ENCODE measurements at regions of chr7 and their contacts with region 1.

Region 1: DNA sequence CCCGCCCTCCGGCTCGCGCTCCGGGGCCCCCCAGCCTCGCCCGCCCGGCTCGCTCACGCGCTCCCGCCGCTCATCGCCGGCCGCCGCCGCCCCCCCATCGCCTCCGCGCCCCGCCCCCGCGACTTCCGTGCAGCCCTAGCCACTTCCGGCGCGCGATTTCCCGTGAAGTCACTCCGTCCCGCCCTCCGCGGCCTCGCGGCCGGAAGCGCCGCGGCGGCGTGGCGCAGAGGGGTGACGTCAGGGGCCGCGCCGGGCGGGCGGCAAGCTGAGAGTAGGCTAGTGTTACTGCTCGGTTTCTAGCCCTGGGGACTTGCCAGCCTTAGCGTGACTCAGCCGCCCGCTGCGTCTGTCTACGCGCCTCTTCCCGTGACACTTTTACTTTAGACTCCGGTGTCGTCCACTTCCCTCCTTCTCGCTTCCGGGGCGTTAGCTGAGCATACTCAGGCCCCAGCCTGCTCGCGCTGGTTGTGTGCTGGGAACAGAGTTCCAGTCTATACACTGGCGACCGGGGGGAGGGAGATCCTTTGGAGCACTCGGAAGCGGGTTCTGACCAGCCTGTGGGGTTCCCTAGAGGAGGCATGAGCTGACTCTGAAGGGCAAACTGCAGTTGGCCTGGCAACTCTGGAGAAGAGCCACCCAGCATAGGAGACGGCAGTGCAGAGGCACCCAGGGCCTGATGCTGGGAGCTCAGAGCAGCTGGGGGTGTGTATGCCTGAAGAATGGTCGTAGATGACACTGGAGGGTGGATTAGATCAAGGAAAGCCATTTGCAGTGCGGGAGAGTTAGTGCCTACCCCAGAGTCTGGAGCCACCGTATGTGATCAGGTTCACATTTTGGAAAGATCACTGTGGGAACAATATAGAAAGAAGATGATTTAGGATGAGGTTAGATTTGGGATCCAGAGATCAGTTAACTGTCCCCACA is at the start of gene PURB:
- DNase-seq: peak; percentile 84 to 97
- H3K4me3 ChIP-seq: peak within 1 kb of the TSS; percentile 58 to 97
- H3K27ac ChIP-seq: peak within 1 kb of the TSS; percentile 98 to 99
- H3K4me1 ChIP-seq: peaks cover 13 to 34% of the 10 kb centered on the region in 2 donors
- H3K27me3 ChIP-seq: no peaks in the 10 kb centered on the region
- CTCF ChIP-seq: no peak
- total RNA-seq, gene PURB: 19.1 TPM

Region 2: GRCh38 chr7:44581879-44582603 is 303.6 kb before region 1 on chr7 and contains the start of gene TMED4:
- intact Hi-C with region 1: loop called (anchors 1 kb)
- DNase-seq: peak; percentile 98 to 100
- H3K4me3 ChIP-seq: peak within 1 kb of the TSS; percentile 92 to 96
- H3K27ac ChIP-seq: peak within 1 kb of the TSS; percentile 88 to 97
- H3K4me1 ChIP-seq: peaks cover 6 to 17% of the 10 kb centered on the region in 2 donors
- H3K27me3 ChIP-seq: no peaks in the 10 kb centered on the region
- CTCF ChIP-seq: no peak
- total RNA-seq, gene TMED4: 69.1 TPM

Region 3: GRCh38 chr7:44735403-44736165 is 150.1 kb before region 1 on chr7:
- intact Hi-C with region 1: no loop called
- DNase-seq: no peak
- H3K4me3 ChIP-seq: no peak overlapping the region
- H3K27ac ChIP-seq: no peak overlapping the region
- H3K4me1 ChIP-seq: no peaks in the 10 kb centered on the region
- H3K27me3 ChIP-seq: no peaks in the 10 kb centered on the region
- CTCF ChIP-seq: no peak

Region 4: DNA sequence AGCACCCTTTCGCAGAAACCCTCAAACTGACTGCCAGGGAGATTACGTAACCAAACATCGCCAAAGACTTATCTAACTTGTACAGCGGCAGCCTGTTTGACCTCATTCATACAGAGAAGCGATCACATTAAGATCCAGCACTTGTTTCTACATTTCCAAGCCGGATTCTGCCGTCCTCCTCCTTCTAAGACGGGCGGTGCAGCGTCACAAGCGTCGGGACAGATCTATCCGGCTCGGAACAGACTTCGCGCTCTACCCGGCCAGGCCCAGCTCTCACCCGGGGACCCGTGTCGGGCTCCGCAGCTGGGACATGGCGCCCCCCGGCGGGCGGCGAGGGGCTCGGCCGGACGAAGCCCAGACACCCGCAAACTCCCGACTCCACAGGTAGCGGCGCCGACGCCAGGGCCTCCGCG is 38.1 kb before region 1 on chr7:
- intact Hi-C with region 1: loop called (anchors 1 kb)
- DNase-seq: peak; percentile 53 to 92
- H3K4me3 ChIP-seq: peak overlapping the region; percentile 68 to 87
- H3K27ac ChIP-seq: peak overlapping the region; percentile 91 to 94
- H3K4me1 ChIP-seq: peaks cover 3 to 17% of the 10 kb centered on the region in 2 donors
- H3K27me3 ChIP-seq: no peaks in the 10 kb centered on the region
- CTCF ChIP-seq: peak; percentile 89 to 98 (median 92)

Region 5: DNA sequence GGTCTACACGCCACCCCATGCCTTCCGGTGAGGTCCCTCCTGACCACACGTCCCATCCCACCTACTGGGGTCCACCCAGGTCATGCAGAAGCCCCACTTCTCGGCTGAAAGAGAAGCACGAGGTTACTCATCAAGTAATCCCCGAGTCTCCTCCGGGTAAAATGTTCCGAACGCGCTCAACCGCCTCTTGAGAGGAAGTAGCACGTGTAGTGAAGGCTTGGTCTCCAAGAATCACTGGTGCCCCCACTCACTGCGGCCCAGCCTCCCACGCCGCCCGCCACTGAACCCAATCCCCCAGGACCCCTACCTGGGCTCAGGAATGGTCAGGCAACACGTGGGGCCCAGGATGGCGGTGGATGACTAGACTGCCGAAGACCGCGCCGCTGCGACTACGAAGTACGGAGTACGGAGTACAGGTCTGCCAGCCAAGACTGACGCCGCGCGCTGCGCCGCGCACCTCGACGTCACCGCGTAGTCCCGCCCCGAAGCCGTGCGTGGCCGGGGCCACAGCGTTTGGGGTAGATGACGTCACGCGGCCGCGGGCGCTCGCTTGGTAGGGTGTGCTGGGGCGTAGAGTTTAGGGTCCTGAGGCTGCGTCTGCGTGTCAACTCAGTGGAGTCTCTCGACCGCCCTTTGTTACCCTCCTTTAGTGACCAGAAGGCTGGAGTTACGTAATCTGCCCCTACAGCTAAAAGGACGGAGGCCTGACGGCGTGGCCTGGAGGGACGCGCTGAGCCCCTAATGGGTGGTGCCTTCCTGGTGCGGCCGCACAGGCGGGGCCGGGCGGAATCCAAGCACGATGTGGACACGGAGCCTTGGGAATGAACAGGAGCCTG is 100.8 kb after region 1 on chr7:
- intact Hi-C with region 1: loop called (anchors 1 kb)
- DNase-seq: peak; percentile 58 to 96
- H3K4me3 ChIP-seq: peak overlapping the region; percentile 68
- H3K27ac ChIP-seq: peak overlapping the region; percentile 89 to 90
- H3K4me1 ChIP-seq: peaks cover 6 to 12% of the 10 kb centered on the region in 2 donors
- H3K27me3 ChIP-seq: no peaks in the 10 kb centered on the region
- CTCF ChIP-seq: no peak

Region 6: DNA sequence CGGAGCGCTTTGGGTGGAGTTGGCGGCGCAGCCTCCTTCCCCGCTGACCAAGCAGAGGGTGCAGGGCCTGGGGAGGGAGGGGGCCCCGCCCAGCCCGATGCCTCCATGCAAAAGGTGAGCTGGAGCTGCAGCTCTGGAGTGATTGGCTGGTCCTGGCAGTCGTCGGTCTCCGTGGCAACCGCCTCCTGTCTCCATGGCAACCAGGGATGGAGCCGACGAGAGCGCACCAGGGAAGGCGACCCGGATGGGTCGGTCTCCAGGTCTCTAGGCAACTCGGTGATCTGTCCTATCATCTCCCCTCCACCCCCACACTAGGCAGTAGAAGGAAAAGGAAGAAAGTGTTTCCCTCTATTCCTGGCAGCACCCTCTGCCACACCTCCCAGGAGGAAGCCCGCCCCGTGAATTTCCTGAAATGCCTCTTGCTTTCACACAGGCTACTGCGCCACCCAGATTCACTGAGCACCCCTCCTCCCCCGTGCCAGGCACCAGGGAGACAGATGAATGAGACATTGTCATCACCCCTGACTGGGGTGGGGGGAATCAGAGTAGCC is 203.8 kb after region 1 on chr7:
- intact Hi-C with region 1: loop called (anchors 2 kb)
- DNase-seq: peak in 1 of 2 donors; percentile 83
- H3K4me3 ChIP-seq: peak overlapping the region; percentile 80 to 91
- H3K27ac ChIP-seq: peak overlapping the region; percentile 89 to 92
- H3K4me1 ChIP-seq: peaks cover 3 to 11% of the 10 kb centered on the region in 2 donors
- H3K27me3 ChIP-seq: no peaks in the 10 kb centered on the region
- CTCF ChIP-seq: no peak

Measured in ascending aorta (tissue), 2 donors.